Sciatic nerve (tissue), 2 donors: ENCODE measurements at regions of chr12 and their contacts with region 1.

Region 1: GRCh38 chr12:72694193-72694592 is 422.0 kb downstream of the TRHDE start:
- DNase-seq: no peak
- ATAC-seq: no peak

Region 2: GRCh38 chr12:74204236-74204635 is 1510.0 kb after region 1 on chr12:
- intact Hi-C with region 1: loop called (anchors 5 kb)
- DNase-seq: no peak
- ATAC-seq: no peak